Activated B cell treated with CpG ODN at 0.5 μM for 24 hours (primary cell): ENCODE measurements at regions of chr13 and their contacts with region 1.

Region 1: DNA sequence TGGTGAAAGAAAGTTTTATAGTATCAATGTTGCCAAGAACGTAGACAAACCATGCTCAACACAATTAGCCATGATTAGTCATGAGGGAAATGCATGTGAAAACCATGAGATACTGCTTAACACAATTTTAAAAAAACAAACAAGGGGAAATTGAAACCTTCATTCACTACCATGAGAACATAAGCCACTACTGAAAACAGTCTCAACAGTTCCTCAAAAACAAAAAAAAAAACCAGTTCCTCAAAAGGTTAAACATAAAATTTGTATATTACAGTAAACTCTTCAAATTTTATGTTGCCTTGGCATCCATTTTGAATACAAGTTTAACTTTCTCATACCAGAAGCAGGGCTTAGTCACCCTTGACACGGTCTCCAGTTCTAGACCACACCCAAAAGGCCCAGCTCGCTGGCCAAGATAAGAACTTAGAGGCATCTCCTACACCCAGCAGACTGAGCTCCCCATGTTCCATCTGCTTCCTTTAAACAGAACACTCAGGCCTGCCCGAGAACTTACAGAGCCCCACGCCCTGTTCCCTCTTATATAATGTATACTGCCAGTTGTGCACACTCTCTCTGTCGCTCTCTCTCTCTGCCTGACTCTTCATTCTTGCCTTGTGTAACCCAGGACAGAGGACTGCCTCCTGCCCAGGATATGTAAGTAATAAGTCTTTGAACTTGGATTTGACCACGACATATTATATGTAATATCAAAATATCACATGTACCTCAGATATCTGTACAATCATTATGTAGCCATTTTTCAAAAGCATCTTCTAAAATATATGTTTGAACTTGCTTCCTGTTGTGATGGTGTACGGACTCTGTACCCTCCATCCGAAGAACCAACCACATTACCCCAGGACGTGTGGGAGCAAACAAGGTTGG is 67.4 kb downstream of the STK24 start:
- DNase-seq: no peak
- ATAC-seq: peak; percentile 84
- H3K4me3 Mint-ChIP-seq: peak overlapping the region; percentile 71
- H3K27ac Mint-ChIP-seq: peak overlapping the region; percentile 96
- H3K4me1 Mint-ChIP-seq: peaks cover 100% of the 10 kb centered on the region
- H3K27me3 Mint-ChIP-seq: no peaks in the 10 kb centered on the region
- CTCF ChIP-seq: no peak

Region 2: GRCh38 chr13:98476538-98476966 is 33.0 kb before region 1 on chr13:
- CTCF ChIA-PET with region 1: interaction called, 3 read pairs
- POLR2A ChIA-PET with region 1: interaction called, 6 read pairs
- intact Hi-C with region 1: loop called (anchors 1 kb)
- DNase-seq: peak; percentile 60
- ATAC-seq: peak; percentile 92
- H3K4me3 Mint-ChIP-seq: peak overlapping the region; percentile 76
- H3K27ac Mint-ChIP-seq: peak overlapping the region; percentile 94
- H3K4me1 Mint-ChIP-seq: peaks cover 50% of the 10 kb centered on the region
- H3K27me3 Mint-ChIP-seq: no peaks in the 10 kb centered on the region
- CTCF ChIP-seq: no peak

Region 3: GRCh38 chr13:98523455-98524102 is 14.1 kb after region 1 on chr13:
- CTCF ChIA-PET with region 1: no interaction called
- POLR2A ChIA-PET with region 1: interaction called, 18 read pairs
- intact Hi-C with region 1: loop called (anchors 2 kb)
- DNase-seq: no peak
- ATAC-seq: no peak
- H3K4me3 Mint-ChIP-seq: no peak overlapping the region
- H3K27ac Mint-ChIP-seq: peak overlapping the region; percentile 71
- H3K4me1 Mint-ChIP-seq: peaks cover 94% of the 10 kb centered on the region
- H3K27me3 Mint-ChIP-seq: no peaks in the 10 kb centered on the region
- CTCF ChIP-seq: no peak

Region 4: GRCh38 chr13:98542568-98543377 is 33.3 kb after region 1 on chr13:
- CTCF ChIA-PET with region 1: no interaction called
- POLR2A ChIA-PET with region 1: interaction called, 3 read pairs
- intact Hi-C with region 1: loop called (anchors 5 kb)
- DNase-seq: no peak
- ATAC-seq: peak; percentile 73
- H3K4me3 Mint-ChIP-seq: peak overlapping the region; percentile 77
- H3K27ac Mint-ChIP-seq: peak overlapping the region; percentile 73
- H3K4me1 Mint-ChIP-seq: peaks cover 85% of the 10 kb centered on the region
- H3K27me3 Mint-ChIP-seq: no peaks in the 10 kb centered on the region
- CTCF ChIP-seq: no peak

Region 5: DNA sequence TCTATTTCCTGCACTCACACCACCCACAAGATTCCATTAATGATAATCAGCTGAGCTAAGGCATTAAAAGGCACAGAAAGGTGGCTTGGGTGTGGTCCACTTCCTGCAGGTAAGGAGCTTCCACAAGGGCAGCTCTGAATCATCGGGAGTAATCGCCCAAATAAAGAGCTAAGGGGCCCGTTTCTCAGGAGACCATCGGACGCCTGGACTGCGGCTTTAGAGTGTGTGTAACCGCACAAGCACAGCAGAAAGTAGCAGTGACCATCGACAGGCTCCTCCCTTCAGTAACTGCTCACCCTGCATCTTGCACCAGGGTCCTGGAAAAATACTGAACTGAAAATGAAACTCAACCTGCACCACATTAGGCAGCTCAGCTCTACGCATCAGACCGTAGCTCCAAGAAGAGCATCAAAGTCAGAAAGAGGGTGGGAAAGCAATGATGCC is 61.4 kb after region 1 on chr13:
- CTCF ChIA-PET with region 1: interaction called, 3 read pairs
- POLR2A ChIA-PET with region 1: interaction called, 5 read pairs
- intact Hi-C with region 1: loop called (anchors 1 kb)
- DNase-seq: peak; percentile 39
- ATAC-seq: peak; percentile 84
- H3K4me3 Mint-ChIP-seq: peak overlapping the region; percentile 82
- H3K27ac Mint-ChIP-seq: peak overlapping the region; percentile 91
- H3K4me1 Mint-ChIP-seq: peaks cover 99% of the 10 kb centered on the region
- H3K27me3 Mint-ChIP-seq: no peaks in the 10 kb centered on the region
- CTCF ChIP-seq: no peak

Region 6: GRCh38 chr13:99658261-99658991 is 1148.9 kb after region 1 on chr13:
- CTCF ChIA-PET with region 1: no interaction called
- POLR2A ChIA-PET with region 1: no interaction called
- intact Hi-C with region 1: no loop called
- DNase-seq: peak; percentile 27
- ATAC-seq: peak; percentile 48
- H3K4me3 Mint-ChIP-seq: peak overlapping the region; percentile 82
- H3K27ac Mint-ChIP-seq: no peak overlapping the region
- H3K4me1 Mint-ChIP-seq: peaks cover 24% of the 10 kb centered on the region
- H3K27me3 Mint-ChIP-seq: peaks cover 3% of the 10 kb centered on the region
- CTCF ChIP-seq: no peak